MCF 10A (cell line): ENCODE measurements at regions of chr14 and their contacts with region 1.

Region 1: DNA sequence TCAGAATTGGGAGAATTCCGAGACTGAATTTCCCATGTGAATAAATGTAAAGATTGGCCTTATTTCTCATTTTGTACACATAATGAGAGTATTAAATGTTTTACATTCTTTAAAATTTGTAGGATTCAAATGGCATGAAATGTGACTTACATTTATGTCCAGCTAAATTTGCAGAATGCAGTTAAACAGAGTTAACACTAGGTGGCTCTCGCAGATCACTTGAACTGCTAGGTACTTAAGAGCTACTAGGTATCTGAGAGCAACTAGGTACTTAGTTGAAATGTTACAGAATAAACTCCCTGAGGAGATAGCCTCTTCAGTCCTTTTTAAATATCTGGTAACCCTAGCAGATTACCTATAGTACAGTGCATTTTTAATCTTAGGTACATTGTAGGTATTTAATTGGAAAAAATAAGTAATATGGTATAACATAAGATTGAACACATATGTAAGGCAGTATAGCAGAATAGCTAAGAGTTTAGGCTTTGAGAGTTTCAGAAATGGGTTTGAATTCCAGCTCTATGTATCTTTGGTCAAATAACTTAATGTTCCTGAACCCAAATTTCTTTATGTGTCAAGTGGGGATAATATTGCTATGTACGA is 73.8 kb downstream of the KIAA0586 start:
- DNase-seq: peak; percentile 50
- H3K4me3 Mint-ChIP-seq: no peak overlapping the region
- H3K27ac Mint-ChIP-seq: no peak overlapping the region
- H3K4me1 Mint-ChIP-seq: no peaks in the 10 kb centered on the region
- H3K27me3 Mint-ChIP-seq: no peaks in the 10 kb centered on the region
- CTCF ChIP-seq: peak; percentile 58

Region 2: DNA sequence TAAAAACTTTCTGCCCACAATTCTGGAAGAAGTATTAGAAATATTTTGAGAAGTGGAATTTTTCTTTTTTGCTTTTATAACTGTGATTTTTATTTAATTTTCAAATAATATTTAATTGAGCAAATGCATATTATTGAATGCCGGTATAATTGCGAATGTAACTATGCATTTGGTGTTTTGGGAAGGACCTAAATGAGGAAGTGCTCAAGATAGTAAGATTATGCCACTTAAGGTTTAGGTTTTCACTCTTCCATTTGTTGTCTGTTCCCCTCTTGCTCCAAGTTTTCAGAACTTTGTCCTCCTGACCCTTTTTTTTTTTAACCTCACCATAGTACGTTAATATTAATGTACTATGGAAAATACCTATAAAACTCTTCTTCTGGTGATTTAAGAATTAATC is 12.0 kb after region 1 on chr14:
- CTCF ChIA-PET with region 1: interaction called, 18 read pairs
- POLR2A ChIA-PET with region 1: interaction called, 5 read pairs
- intact Hi-C with region 1: no loop called
- DNase-seq: no peak
- H3K4me3 Mint-ChIP-seq: no peak overlapping the region
- H3K27ac Mint-ChIP-seq: no peak overlapping the region
- H3K4me1 Mint-ChIP-seq: no peaks in the 10 kb centered on the region
- H3K27me3 Mint-ChIP-seq: no peaks in the 10 kb centered on the region
- CTCF ChIP-seq: no peak

Region 3: DNA sequence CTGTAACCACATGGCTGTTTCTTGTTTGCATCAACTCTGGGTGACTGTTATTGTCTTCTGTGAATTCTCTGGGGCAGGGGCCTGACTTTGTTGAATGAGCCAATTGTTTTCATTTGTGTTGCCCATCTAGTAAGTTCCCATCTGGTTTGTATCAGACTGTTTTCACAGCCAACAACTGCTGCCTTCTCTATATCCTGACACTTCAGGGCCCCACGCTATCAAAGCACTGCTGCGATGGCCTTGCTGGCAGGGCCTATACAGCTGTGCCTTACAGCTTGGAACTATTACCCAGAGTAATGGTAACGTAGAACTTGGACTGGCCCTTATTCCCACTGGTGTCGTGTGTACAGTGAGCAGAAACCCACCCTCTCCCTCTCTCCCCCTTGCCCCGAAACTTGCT is 32.1 kb after region 1 on chr14:
- CTCF ChIA-PET with region 1: no interaction called
- POLR2A ChIA-PET with region 1: no interaction called
- intact Hi-C with region 1: no loop called
- DNase-seq: no peak
- H3K4me3 Mint-ChIP-seq: no peak overlapping the region
- H3K27ac Mint-ChIP-seq: no peak overlapping the region
- H3K4me1 Mint-ChIP-seq: no peaks in the 10 kb centered on the region
- H3K27me3 Mint-ChIP-seq: no peaks in the 10 kb centered on the region
- CTCF ChIP-seq: no peak

Region 4: DNA sequence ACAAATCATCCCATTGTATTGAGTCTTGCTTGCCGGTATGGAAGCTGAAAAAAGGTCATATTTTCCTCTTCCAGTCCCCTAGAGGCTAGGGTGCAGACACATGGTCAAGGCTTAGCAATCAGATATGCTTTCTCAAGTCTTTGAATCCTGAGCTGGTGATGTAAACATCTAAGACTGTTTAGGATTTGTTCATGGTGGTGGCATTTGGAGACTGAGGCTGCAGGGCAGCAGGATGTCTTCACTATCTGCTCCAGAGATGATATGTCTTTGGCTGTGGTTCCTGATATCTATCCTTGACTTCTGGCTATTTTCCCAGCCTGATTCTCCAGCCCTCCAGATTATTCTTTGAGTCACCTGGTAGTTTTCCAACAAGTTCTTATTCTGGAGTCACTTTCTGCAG is 86.0 kb after region 1 on chr14:
- CTCF ChIA-PET with region 1: no interaction called
- POLR2A ChIA-PET with region 1: no interaction called
- intact Hi-C with region 1: no loop called
- DNase-seq: no peak
- H3K4me3 Mint-ChIP-seq: no peak overlapping the region
- H3K27ac Mint-ChIP-seq: no peak overlapping the region
- H3K4me1 Mint-ChIP-seq: no peaks in the 10 kb centered on the region
- H3K27me3 Mint-ChIP-seq: peaks cover 71% of the 10 kb centered on the region
- CTCF ChIP-seq: no peak

Region 5: DNA sequence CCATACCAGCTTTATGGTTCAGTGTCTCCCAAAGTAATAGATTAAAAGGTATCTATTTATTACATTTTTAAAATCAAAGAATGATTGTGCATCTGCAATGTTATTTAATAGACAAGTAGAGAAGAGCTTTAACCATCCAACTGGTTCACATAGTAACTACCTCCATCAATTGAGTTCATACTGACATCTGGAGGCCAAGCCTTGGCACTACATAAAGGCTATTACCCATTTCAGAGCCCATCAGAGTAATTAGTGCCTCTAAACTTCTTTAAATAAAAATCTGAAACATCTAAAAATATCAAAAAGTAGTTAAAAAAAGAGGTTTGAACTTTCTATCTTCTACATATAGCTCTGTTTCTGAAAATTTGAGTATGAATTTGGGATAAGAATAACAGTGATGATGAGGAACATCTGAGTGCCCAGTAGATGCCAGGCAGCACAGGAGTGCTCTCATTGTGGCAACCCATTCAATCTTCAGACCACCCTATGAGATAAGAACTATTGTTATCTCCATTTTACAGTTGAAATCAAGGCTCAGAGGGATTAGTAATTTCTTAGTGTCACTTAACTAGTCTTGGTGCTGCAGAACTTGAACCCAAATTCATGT is 554.2 kb after region 1 on chr14:
- CTCF ChIA-PET with region 1: interaction called, 13 read pairs
- POLR2A ChIA-PET with region 1: no interaction called
- intact Hi-C with region 1: loop called (anchors 1 kb)
- DNase-seq: peak; percentile 28
- H3K4me3 Mint-ChIP-seq: no peak overlapping the region
- H3K27ac Mint-ChIP-seq: no peak overlapping the region
- H3K4me1 Mint-ChIP-seq: no peaks in the 10 kb centered on the region
- H3K27me3 Mint-ChIP-seq: peaks cover 29% of the 10 kb centered on the region
- CTCF ChIP-seq: peak; percentile 46